OCI-LY7 (cell line): ENCODE measurements at regions of chr1 and their contacts with region 1.

Region 1: GRCh38 chr1:3423245-3423829 is 31.1 kb upstream of the ARHGEF16 start:
- DNase-seq: no peak
- H3K4me3 ChIP-seq: no peak overlapping the region
- H3K27ac ChIP-seq: no peak overlapping the region
- H3K4me1 ChIP-seq: no peaks in the 10 kb centered on the region
- CTCF ChIP-seq: no peak

Region 2: DNA sequence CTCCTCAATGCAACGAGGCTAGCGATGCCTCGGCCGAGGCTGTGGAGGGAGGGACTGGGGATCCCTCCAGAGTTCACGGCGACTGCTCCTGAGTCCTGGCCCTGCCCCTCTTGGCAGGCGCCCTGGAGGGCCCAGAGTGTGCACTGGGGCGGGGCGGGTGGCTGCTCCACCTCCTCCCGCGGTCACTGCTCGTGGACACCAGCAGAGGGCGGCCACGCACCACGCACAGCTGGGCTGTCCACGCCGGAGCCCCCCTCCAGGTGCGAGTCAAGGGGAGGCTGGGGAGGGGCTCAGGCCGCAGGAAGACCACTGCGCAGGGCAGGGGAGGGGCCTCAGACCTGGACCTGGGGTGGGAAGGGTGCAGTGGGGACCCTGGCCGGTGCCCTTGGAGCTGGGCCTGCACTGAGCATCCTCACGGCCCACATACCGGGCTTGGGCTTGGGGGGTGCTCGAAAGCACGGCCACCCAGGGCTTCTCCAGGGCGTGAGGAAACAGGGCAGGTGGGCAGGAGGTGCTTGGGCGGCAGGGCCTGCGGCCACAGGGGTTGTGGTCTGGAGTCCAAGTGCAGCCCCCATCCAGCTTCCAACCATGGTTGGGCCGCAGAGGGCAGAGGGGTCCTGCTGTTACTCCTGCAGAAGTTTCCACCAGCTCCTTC is 601.2 kb before region 1 on chr1:
- CTCF ChIA-PET with region 1: no interaction called
- POLR2A ChIA-PET with region 1: no interaction called
- intact Hi-C with region 1: loop called (anchors 5 kb)
- DNase-seq: peak; percentile 7
- H3K4me3 ChIP-seq: no peak overlapping the region
- H3K27ac ChIP-seq: no peak overlapping the region
- H3K4me1 ChIP-seq: no peaks in the 10 kb centered on the region
- CTCF ChIP-seq: peak; percentile 63

Region 3: DNA sequence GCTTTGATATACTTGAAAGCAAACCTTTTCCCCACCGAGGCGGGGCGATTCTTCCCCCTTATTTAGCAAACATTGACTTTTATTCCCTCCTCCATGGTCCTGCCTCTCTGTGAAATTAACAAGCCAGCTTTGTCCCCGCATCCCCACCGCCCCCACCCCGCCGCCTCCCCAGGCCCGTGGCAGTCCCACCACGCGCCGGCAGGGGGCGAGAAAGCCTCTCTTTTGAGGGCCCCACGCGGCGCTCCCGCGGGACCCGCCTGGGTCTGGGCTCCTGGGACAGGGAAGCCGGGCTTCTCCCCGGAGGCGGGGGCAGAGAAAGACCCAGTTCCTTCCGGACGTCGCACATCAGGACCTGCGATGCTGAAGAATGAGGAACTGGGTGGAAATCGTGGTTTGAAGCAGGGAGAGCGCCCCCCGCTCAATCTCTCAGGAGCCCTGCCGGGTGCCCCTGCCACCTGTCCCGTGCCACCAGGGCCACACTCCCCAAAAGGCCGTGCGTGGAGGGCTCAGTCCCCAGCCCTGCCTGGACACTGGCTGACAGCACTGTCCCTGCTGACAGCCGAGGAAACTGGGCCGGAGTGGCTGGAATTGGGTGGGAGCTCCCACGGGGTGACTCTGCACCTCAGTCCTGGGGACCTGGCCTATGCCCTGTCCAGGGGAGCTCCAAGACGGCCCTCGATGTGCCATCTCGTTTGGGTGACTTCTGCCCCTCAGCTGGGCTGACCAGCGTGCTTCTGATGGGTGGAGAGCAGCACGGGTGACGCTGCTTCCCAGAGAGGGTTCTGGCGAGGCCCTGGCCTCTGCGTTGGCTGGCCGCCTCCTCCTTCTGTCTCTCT is 410.7 kb before region 1 on chr1:
- CTCF ChIA-PET with region 1: no interaction called
- POLR2A ChIA-PET with region 1: no interaction called
- intact Hi-C with region 1: loop called (anchors 2 kb)
- DNase-seq: peak; percentile 25
- H3K4me3 ChIP-seq: no peak overlapping the region
- H3K27ac ChIP-seq: no peak overlapping the region
- H3K4me1 ChIP-seq: no peaks in the 10 kb centered on the region
- CTCF ChIP-seq: peak; percentile 66

Region 4: GRCh38 chr1:3247521-3248121 is 175.7 kb before region 1 on chr1:
- CTCF ChIA-PET with region 1: no interaction called
- POLR2A ChIA-PET with region 1: no interaction called
- intact Hi-C with region 1: no loop called
- DNase-seq: no peak
- H3K4me3 ChIP-seq: no peak overlapping the region
- H3K27ac ChIP-seq: no peak overlapping the region
- H3K4me1 ChIP-seq: no peaks in the 10 kb centered on the region
- CTCF ChIP-seq: no peak

Region 5: GRCh38 chr1:3900969-3901529 is 477.7 kb after region 1 on chr1:
- CTCF ChIA-PET with region 1: no interaction called
- POLR2A ChIA-PET with region 1: no interaction called
- intact Hi-C with region 1: no loop called
- DNase-seq: peak; percentile 98
- H3K4me3 ChIP-seq: peak overlapping the region; percentile 96
- H3K27ac ChIP-seq: peak overlapping the region; percentile 100
- H3K4me1 ChIP-seq: peaks cover 61% of the 10 kb centered on the region
- CTCF ChIP-seq: no peak